Head of caudate nucleus (tissue), 42 donors: ENCODE measurements at regions of chr19 and their contacts with region 1.

Region 1: DNA sequence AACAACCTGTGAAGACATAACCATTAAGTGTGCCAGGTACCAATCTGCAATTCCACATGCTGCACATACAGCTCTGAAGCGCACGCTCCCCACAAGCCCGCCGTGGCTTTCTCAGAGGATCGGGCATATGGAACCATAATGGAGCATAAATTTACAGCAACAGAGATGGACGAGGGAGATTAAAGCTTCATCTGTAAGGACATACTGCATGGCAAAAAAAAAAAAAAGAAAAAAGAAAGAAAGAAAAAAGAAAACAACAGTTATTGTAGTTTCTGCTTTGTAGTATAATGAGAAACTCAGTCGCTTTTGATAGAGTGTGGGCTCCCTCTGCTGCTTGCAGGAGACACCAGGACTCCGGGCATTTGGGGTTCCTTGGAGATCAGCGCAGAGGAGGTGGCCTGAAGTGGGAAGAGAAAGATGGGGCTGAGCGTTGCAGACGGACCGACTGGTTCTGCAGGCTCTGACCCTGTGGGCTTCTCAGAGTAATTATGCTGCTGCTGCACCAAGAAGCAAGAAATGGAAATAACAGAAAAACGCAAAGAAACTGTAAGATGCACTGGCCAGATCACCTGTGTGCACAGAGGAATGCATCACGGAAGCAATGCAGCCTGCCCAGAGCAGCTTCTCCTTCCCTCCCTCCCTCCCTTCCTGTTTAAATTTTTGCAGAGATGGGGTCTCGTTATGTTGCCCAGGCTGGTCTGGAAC is 10.8 kb upstream of the PDCD5 start:
- DNase-seq: peak; percentile 46 to 86 (median 70)

Region 2: GRCh38 chr19:30682999-30683536 is 1887.2 kb before region 1 on chr19:
- intact Hi-C with region 1: loop called (anchors 10 kb)
- DNase-seq: peak; percentile 66 to 94 (median 84)

Region 3: GRCh38 chr19:32339988-32340874 is 230.0 kb before region 1 on chr19:
- intact Hi-C with region 1: loop called (anchors 5 kb)
- DNase-seq: peak; percentile 34 to 91 (median 77)

Region 4: DNA sequence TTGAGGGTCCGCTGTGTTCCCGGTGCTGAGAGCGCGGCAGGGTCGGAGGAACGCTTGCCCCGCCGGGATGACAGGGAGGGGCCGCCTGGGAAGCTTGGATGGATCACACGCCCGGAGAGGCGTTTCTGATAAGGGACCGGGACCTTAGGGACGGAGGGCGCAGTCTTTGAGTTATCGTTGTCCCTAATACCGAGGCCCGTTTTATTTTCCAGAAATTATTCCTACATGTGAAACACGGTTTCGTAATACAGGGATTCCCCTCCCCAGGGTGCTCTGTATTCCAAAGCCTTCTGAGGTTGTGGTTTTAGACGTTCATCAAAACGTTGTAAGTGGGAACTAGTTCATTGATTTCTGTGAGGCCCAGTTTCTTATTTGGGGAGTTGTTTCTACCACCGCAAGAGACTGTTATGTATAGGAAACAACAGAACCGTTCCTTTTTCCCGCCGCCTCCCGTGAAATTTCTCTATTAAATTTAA is 11.5 kb after region 1 on chr19:
- intact Hi-C with region 1: no loop called
- DNase-seq: peak in 23 of 42 donors; percentile 9 to 47 (median 29)